ENCODE measurements at regions of chr19 and their contacts with region 1.

Region 1: GRCh38 chr19:662962-663681 is at the start of gene RNF126:
- DNase-seq: peak; percentile 94
- ATAC-seq: peak; percentile 71
- H3K4me3 ChIP-seq: peak within 1 kb of the TSS; percentile 65 to 94 (median 82)
- H3K4me3 Mint-ChIP-seq: peak within 1 kb of the TSS; percentile 96
- H3K27ac ChIP-seq: peak within 1 kb of the TSS; percentile 87 to 97
- H3K27ac Mint-ChIP-seq: peak within 1 kb of the TSS; percentile 98
- H3K4me1 ChIP-seq: peaks cover 31 to 60% of the 10 kb centered on the region in 2 donors
- H3K4me1 Mint-ChIP-seq: peaks cover 45% of the 10 kb centered on the region
- H3K27me3 ChIP-seq: no peaks in the 10 kb centered on the region
- H3K27me3 Mint-ChIP-seq: no peaks in the 10 kb centered on the region
- CTCF ChIP-seq: no peak
- total RNA-seq, gene RNF126: 74.3 and 88.8 TPM in 2 replicates

Region 2: GRCh38 chr19:572140-572742 is 90.9 kb before region 1 on chr19 and contains the start of gene BSG:
- CTCF ChIA-PET with region 1: interaction called, 3 read pairs
- POLR2A ChIA-PET with region 1: no interaction called
- intact Hi-C with region 1: loop called (anchors 1 kb)
- DNase-seq: peak; percentile 99
- ATAC-seq: peak; percentile 78
- H3K4me3 ChIP-seq: peak within 1 kb of the TSS; percentile 69 to 89 (median 81)
- H3K4me3 Mint-ChIP-seq: peak within 1 kb of the TSS; percentile 99
- H3K27ac ChIP-seq: peak within 1 kb of the TSS; percentile 85 to 89
- H3K27ac Mint-ChIP-seq: peak within 1 kb of the TSS; percentile 99
- H3K4me1 ChIP-seq: peaks cover 19 to 33% of the 10 kb centered on the region in 2 donors
- H3K4me1 Mint-ChIP-seq: peaks cover 35% of the 10 kb centered on the region
- H3K27me3 ChIP-seq: no peaks in the 10 kb centered on the region
- H3K27me3 Mint-ChIP-seq: no peaks in the 10 kb centered on the region
- CTCF ChIP-seq: no peak
- total RNA-seq, gene BSG: 131 and 144 TPM in 2 replicates

Region 3: DNA sequence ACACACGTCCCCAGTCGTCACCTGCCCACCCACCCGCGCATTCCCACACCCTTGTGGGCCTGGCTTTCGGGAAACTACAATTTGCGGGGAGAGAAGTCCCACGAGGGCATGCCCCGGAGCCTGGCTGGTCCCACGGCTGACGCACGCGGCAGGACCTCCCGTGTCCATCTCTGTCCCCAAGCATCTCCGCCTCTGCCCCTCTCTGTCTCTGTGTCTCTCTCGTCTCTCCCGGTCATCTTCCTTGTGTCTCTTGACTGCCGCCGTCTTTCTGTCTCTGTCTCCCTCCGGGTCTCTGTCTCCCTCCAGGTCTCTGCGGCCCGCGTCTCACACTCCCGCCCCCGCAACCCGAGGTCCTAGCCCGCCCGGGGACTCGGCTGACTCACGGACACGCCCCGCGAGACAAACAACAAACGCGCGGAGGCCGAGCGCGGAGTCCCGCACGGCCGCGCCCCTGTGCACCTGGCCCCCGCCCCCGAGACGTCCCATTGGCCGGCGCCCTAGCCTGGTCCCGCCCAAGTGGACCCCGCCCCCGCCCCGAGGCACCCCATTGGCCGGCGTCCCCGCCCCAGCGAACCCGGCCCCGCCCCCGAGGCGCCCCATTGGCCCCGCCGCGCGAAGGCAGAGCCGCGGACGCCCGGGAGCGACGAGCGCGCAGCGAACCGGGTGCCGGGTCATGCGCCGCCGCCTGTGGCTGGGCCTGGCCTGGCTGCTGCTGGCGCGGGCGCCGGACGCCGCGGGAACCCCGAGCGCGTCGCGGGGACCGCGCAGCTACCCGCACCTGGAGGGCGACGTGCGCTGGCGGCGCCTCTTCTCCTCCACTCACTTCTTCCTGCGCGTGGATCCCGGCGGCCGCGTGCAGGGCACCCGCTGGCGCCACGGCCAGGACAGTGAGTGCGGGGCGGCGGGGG is 23.6 kb before region 1 on chr19 and contains the start of gene FGF22:
- CTCF ChIA-PET with region 1: no interaction called
- POLR2A ChIA-PET with region 1: interaction called, 20 read pairs
- intact Hi-C with region 1: loop called (anchors 1 kb)
- DNase-seq: peak; percentile 92
- ATAC-seq: peak; percentile 91
- H3K4me3 ChIP-seq: peak within 1 kb of the TSS in 4 of 5 experiments; percentile 21 to 57 (median 40)
- H3K4me3 Mint-ChIP-seq: peak within 1 kb of the TSS; percentile 90
- H3K27ac ChIP-seq: no peak within 1 kb of the TSS
- H3K27ac Mint-ChIP-seq: peak within 1 kb of the TSS; percentile 95
- H3K4me1 ChIP-seq: peaks cover 12 to 39% of the 10 kb centered on the region in 2 donors
- H3K4me1 Mint-ChIP-seq: peaks cover 22% of the 10 kb centered on the region
- H3K27me3 ChIP-seq: peaks cover 0 to 2% (median 0%) of the 10 kb centered on the region in 4 experiments
- H3K27me3 Mint-ChIP-seq: no peaks in the 10 kb centered on the region
- CTCF ChIP-seq: no peak
- total RNA-seq, gene FGF22: 2.9 and 3.4 TPM in 2 replicates

Region 4: GRCh38 chr19:680287-681028 is 17.3 kb after region 1 on chr19:
- CTCF ChIA-PET with region 1: interaction called, 8 read pairs
- POLR2A ChIA-PET with region 1: interaction called, 6 read pairs
- intact Hi-C with region 1: loop called (anchors 1 kb)
- DNase-seq: peak; percentile 99
- ATAC-seq: peak; percentile 84
- H3K4me3 ChIP-seq: peak overlapping the region; percentile 53 to 91 (median 60)
- H3K4me3 Mint-ChIP-seq: peak overlapping the region; percentile 96
- H3K27ac ChIP-seq: peak overlapping the region; percentile 81 to 89
- H3K27ac Mint-ChIP-seq: peak overlapping the region; percentile 98
- H3K4me1 ChIP-seq: peaks cover 11 to 26% of the 10 kb centered on the region in 2 donors
- H3K4me1 Mint-ChIP-seq: peaks cover 9% of the 10 kb centered on the region
- H3K27me3 ChIP-seq: peaks cover 0 to 20% (median 6%) of the 10 kb centered on the region in 4 experiments
- H3K27me3 Mint-ChIP-seq: peaks cover 1% of the 10 kb centered on the region
- CTCF ChIP-seq: peak; percentile 56